ENCODE measurements at regions of chr12 and their contacts with region 1.

Region 1: DNA sequence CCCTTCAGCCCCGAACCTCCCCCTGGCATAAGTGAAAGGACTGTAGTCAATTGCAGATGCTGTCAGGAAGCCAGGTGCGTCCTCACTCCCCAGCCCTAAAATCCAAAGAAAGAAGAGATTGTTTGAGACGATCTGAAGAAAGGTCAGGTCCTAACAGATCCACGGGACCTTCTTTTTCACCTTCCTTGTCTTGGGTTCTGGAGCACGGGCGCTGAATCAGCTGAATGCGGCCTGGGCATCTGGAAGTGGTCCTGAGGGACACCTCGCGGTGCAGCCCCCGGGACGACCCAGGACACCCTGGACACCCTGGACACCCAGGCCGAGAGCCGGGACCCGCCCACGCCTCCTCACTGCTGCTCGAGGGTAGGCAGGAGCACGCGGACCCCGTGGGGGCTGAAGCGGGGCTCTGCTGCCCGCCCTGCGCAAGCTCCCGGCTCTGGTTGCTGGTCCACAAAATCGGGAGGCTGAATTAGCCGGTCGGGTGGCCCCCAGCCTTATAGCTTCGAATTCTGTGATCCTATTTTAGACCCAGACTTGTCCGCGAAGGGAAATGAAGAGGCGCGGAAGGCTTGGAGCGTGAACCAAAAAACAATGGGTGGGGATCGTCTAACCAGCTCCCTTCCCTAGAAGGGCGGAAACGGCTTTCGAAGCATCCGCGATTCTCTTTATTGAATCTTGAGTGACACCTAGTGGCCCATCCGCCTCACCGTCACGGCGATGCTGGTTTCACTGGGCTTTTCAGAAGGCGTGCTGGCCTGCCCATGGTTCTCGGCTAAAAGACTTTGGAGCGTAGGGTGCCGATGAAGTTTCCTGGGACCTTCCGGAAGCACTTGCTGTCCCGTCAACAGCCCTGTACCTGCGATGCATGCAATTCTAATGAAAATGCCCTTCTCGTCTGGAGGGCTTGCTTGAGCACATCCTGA is 46.4 kb upstream of the PLXNC1 start:
- DNase-seq: peak; percentile 71
- ATAC-seq: peak; percentile 87
- H3K4me3 ChIP-seq: peak overlapping the region; percentile 49 to 76 (median 55)
- H3K27ac ChIP-seq: no peak overlapping the region
- H3K4me1 ChIP-seq: peaks cover 41% of the 10 kb centered on the region
- H3K27me3 ChIP-seq: peaks cover 0 to 15% of the 10 kb centered on the region in 2 experiments; a peak in 2 of 5 replicates
- CTCF ChIP-seq: peak; percentile 94
- EP300 ChIP-seq: no peak
- POLR2A ChIP-seq: no peak
- RAD21 ChIP-seq: peak; percentile 83

Region 2: DNA sequence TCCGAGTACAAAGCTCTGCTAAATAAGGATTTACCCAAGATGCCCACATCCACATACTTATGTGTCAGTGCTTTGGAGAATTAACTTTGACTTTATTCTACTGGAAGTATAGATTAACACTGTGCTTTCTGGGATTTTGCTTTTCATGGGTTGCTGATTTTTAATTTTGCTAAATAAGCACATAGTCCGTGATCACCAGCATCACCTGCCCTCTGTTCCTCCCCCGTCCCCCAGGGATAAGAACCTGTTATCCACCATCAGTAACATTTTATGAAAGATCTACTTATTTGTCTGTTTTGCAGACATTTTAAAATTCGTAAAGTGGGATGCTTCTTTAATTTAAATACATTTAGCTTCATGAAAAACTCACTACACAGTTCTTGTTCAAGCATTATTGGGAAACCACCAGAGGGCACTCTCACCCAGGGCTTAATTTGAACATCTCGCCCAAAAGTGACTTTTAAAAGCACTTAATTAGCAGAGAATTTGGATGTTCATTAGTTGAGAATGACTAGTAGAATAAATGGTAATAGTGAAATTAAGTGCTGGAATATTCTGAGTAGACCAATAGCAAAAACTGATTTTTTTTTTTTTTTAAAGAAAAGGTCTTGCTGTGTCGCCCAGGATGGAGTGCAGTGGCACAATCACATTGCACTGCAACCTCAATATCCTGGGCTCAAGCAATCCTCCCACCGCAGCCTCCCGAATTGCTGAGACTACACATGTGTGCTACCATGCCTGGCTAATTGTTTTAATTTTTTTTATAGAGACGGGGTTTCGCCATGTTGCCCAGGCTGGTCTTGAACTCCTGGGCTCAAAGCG is 599.0 kb before region 1 on chr12:
- CTCF ChIA-PET with region 1: interaction called, 49 read pairs
- POLR2A ChIA-PET with region 1: no interaction called
- in situ Hi-C with region 1: no loop called
- intact Hi-C with region 1: loop called (anchors 2 kb)
- DNase-seq: peak; percentile 33
- ATAC-seq: no peak
- H3K4me3 ChIP-seq: no peak overlapping the region
- H3K27ac ChIP-seq: no peak overlapping the region
- H3K4me1 ChIP-seq: no peaks in the 10 kb centered on the region
- H3K27me3 ChIP-seq: no peaks in the 10 kb centered on the region
- CTCF ChIP-seq: peak; percentile 59
- EP300 ChIP-seq: no peak
- POLR2A ChIP-seq: no peak
- RAD21 ChIP-seq: peak; percentile 42; the same call in 1 of the 2 replicates

Region 3: DNA sequence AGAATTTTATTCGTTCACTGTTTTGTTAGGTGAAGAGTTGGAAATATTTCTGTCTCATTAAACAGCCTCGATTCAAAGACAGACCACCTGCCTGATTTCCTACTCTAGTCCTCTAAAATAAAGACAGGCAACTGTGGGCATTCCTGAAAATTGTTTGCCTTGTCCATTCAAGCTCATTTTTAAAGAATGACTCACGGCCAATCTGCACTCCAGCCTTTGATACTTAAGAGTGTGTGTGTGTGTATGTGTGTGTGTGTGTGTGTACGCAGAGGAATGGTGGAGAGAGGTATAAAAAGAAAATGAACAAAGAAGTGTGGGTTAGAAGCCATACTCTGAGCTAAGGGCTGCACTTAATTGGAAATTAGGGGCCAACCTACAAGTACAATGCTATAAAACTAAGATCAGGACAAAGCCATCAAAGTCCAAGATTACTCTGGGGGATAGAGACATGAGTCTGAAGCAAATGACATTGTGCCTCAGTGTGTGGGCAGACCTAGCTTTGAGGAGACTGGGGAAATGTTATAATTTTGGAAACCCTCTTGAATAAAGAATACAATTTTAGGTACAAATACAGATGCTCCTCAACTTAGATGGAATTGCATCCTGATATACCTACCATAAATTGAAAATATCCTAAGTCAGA is 575.1 kb before region 1 on chr12:
- CTCF ChIA-PET with region 1: interaction called, 11 read pairs
- POLR2A ChIA-PET with region 1: no interaction called
- in situ Hi-C with region 1: loop called (anchors 5 kb)
- intact Hi-C with region 1: loop called (anchors 1 kb)
- DNase-seq: peak; percentile 86
- ATAC-seq: peak; percentile 55
- H3K4me3 ChIP-seq: no peak overlapping the region
- H3K27ac ChIP-seq: no peak overlapping the region
- H3K4me1 ChIP-seq: peaks cover 42% of the 10 kb centered on the region
- H3K27me3 ChIP-seq: no peaks in the 10 kb centered on the region; a peak in 1 of 5 replicates
- CTCF ChIP-seq: no peak
- EP300 ChIP-seq: peak in 1 of 2 experiments; percentile 60; a peak in 2 of 4 replicates
- POLR2A ChIP-seq: no peak
- RAD21 ChIP-seq: no peak

Region 4: DNA sequence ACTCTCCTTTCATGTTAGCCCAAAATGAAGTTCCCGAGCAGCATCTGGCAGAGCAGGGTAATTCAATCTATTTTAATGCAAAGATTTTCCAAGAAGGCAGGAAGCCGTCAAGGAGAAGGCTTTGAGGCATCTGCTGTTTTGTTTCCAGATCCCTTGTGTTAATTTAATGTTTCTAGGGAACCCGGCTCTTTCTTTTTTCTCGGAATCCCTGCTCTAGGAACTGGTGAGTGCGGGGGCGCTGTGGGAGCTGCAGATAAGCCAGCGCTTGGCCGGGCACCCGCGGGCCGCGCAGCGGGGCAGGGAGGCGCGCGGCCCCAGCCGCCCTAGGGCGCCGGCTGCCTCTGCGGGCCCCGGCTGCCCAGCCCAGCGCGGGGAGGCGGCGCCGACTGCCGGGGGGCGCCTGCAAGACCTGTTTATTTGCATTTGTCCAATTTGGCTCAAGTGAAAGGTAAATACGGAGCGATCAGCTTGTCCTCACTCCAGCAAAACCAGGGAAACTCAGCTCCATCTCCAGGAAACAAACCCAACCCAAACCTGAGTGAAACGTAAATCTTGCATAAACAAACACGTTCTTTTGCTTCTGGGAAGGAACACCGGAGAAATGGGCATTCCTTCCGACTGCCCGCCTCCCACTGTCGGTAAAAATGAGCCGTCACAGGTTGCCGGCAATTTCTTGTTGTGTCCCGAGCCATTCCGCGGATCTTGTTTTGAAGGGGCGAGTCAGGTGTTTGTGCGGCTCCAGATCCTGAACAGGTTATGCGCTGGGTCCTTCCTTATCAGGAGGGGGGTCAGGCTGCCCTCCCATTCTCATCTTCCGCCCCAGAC is 359.7 kb before region 1 on chr12:
- CTCF ChIA-PET with region 1: interaction called, 5 read pairs
- POLR2A ChIA-PET with region 1: no interaction called
- in situ Hi-C with region 1: no loop called
- intact Hi-C with region 1: loop called (anchors 1 kb)
- DNase-seq: peak; percentile 55
- ATAC-seq: peak; percentile 100
- H3K4me3 ChIP-seq: peak overlapping the region; percentile 59 to 84 (median 77)
- H3K27ac ChIP-seq: peak overlapping the region; percentile 63
- H3K4me1 ChIP-seq: peaks cover 30% of the 10 kb centered on the region
- H3K27me3 ChIP-seq: no peaks in the 10 kb centered on the region
- CTCF ChIP-seq: peak; percentile 60
- EP300 ChIP-seq: peak; percentile 28 to 29; a peak in 1 of 4 replicates
- POLR2A ChIP-seq: no peak
- RAD21 ChIP-seq: peak; percentile 91

Region 5: DNA sequence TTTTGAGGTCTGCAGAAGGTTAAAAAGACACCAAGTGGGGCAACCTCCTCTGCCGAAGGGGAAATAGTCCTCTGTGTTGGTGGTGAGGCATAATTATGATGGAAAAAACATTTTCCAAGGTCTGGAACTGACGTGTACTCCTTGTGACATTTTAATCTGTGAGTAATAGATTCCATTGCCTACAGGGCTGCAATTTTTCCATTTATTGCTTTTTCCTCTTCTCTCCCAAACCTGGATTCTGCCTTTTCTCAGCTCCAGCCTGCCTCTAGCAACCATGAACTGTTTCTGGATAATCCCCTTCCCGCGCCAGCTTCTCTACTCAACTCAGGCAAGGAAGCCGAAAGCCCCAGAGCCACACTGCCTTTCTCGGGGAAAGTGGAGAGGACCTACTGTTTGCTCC is 183.7 kb before region 1 on chr12:
- CTCF ChIA-PET with region 1: no interaction called
- POLR2A ChIA-PET with region 1: no interaction called
- in situ Hi-C with region 1: no loop called
- intact Hi-C with region 1: loop called (anchors 1 kb)
- DNase-seq: no peak
- ATAC-seq: no peak
- H3K4me3 ChIP-seq: no peak overlapping the region
- H3K27ac ChIP-seq: no peak overlapping the region
- H3K4me1 ChIP-seq: no peaks in the 10 kb centered on the region
- H3K27me3 ChIP-seq: no peaks in the 10 kb centered on the region; a peak in 1 of 5 replicates
- CTCF ChIP-seq: no peak
- EP300 ChIP-seq: no peak
- POLR2A ChIP-seq: no peak
- RAD21 ChIP-seq: no peak

Region 6: GRCh38 chr12:94062796-94063635 is 39.0 kb before region 1 on chr12:
- CTCF ChIA-PET with region 1: no interaction called
- POLR2A ChIA-PET with region 1: no interaction called
- in situ Hi-C with region 1: no loop called
- intact Hi-C with region 1: no loop called
- DNase-seq: no peak
- ATAC-seq: no peak
- H3K4me3 ChIP-seq: no peak overlapping the region
- H3K27ac ChIP-seq: no peak overlapping the region
- H3K4me1 ChIP-seq: peaks cover 49% of the 10 kb centered on the region
- H3K27me3 ChIP-seq: no peaks in the 10 kb centered on the region
- CTCF ChIP-seq: no peak
- EP300 ChIP-seq: no peak
- POLR2A ChIP-seq: no peak
- RAD21 ChIP-seq: no peak

Measured in HepG2 (cell line).